ENCODE measurements at regions of chr2 and their contacts with region 1.

Region 1: GRCh38 chr2:223101340-223102039 is 49.5 kb downstream of the KCNE4 start:
- DNase-seq: no peak
- H3K4me3 ChIP-seq: no peak overlapping the region
- H3K27ac ChIP-seq: no peak overlapping the region
- H3K4me1 ChIP-seq: peaks cover 8% of the 10 kb centered on the region
- H3K27me3 ChIP-seq: no peaks in the 10 kb centered on the region
- CTCF ChIP-seq: peak in 2 of 3 experiments; percentile 17 to 36
- POLR2A ChIP-seq: no peak

Region 2: DNA sequence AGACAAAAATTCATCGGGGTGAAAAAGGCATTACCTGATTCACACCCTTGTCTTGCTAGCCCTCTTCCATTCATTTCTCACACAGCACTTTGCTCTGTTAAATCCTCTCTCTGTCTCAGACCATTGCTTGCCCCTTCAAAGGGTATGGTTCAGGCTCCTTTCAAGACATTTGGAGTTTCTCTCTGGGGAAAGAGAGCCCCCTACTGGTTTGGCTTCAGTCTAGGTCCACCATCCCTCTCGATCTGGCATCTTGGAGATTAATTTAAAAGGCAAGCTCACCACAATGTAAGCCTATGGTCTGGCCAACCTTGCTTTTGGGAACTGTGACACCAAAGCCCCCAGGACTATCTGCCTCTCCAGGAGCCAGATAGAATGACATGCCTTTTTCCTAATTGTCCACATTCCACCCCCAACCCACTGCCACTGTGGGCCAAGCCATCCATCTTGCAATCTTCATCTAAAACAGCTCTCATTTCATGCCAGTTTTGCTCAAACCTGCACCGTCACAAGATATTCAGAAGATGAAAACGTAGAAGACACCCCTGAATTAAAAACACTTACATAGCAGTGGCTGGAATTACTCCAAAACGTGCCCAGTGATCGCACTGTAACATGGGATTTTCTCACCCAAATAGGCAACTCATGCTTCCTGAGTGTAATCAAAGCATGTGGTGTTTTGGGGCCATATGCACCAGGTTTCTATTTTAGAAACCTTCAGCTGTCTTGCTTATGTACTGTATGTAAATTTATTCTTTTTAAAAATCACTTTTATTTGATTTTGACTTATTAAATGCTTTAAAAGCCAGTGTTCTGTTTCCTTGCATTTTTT is 539.5 kb before region 1 on chr2:
- intact Hi-C with region 1: no loop called
- DNase-seq: peak; percentile 71
- H3K4me3 ChIP-seq: no peak overlapping the region
- H3K27ac ChIP-seq: no peak overlapping the region
- H3K4me1 ChIP-seq: no peaks in the 10 kb centered on the region
- H3K27me3 ChIP-seq: no peaks in the 10 kb centered on the region
- CTCF ChIP-seq: peak; percentile 55 to 66 (median 63)
- POLR2A ChIP-seq: no peak

Region 3: DNA sequence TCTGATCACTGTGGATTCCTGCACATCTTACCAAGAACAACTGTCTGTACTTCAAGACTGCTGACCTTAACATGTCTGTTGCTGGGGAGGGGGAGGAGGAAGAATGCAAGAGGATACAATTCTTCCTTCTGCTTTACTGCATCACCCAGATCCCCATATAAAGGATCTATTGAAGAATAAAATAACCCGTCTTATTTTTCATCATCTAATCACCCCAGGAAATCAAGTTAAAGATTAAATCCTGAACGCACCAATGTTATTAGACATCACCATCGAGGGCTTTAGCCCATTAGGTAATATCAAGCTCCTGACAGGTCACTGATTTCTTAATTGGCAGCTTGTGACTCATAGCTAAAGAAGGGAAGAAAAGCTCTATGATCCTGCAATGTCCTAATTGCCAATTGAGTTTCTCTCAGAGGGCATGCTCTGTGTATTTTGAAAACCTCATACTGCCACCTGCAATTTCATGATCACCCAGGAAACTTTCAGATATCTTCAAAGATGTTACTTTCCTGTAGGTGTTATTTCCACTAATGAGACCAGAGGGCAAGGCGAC is 124.9 kb before region 1 on chr2:
- intact Hi-C with region 1: loop called (anchors 10 kb)
- DNase-seq: no peak
- H3K4me3 ChIP-seq: no peak overlapping the region
- H3K27ac ChIP-seq: no peak overlapping the region
- H3K4me1 ChIP-seq: no peaks in the 10 kb centered on the region
- H3K27me3 ChIP-seq: no peaks in the 10 kb centered on the region
- CTCF ChIP-seq: no peak
- POLR2A ChIP-seq: no peak

Measured in testis (tissue), 5 donors.